GM13977 (cell line): ENCODE measurements at regions of chr10 and their contacts with region 1.

Region 1: GRCh38 chr10:21724695-21725367 is 190.8 kb downstream of the MLLT10 start:
- DNase-seq: peak; percentile 43
- CTCF ChIP-seq: no peak

Region 2: GRCh38 chr10:20299034-20299736 is 1425.6 kb before region 1 on chr10:
- in situ Hi-C with region 1: no loop called
- DNase-seq: no peak
- CTCF ChIP-seq: no peak

Region 3: GRCh38 chr10:21495752-21496342 is 229.0 kb before region 1 on chr10:
- in situ Hi-C with region 1: loop called (anchors 10 kb)
- DNase-seq: peak; percentile 96
- CTCF ChIP-seq: peak; percentile 99